Caco-2 (cell line): ENCODE measurements at regions of chr12 and their contacts with region 1.

Region 1: GRCh38 chr12:51531978-51532497 is 59.0 kb upstream of the SCN8A start:
- DNase-seq: peak; percentile 90 to 92
- H3K4me3 ChIP-seq: no peak overlapping the region
- H3K4me3 Mint-ChIP-seq: peak overlapping the region; percentile 41
- H3K27ac Mint-ChIP-seq: peak overlapping the region; percentile 82
- H3K4me1 ChIP-seq: peaks cover 51% of the 10 kb centered on the region
- H3K4me1 Mint-ChIP-seq: peaks cover 57% of the 10 kb centered on the region
- H3K27me3 ChIP-seq: no peaks in the 10 kb centered on the region
- H3K27me3 Mint-ChIP-seq: no peaks in the 10 kb centered on the region
- CTCF ChIP-seq: peak; percentile 95 to 98

Region 2: GRCh38 chr12:51424662-51425438 is 107.2 kb before region 1 on chr12 and contains the start of gene SLC4A8:
- CTCF ChIA-PET with region 1: interaction called, 58 read pairs
- POLR2A ChIA-PET with region 1: interaction called, 3 read pairs
- intact Hi-C with region 1: loop called (anchors 1 kb)
- DNase-seq: peak; percentile 97 to 99
- H3K4me3 ChIP-seq: peak within 1 kb of the TSS; percentile 57
- H3K4me3 Mint-ChIP-seq: peak within 1 kb of the TSS; percentile 81
- H3K27ac Mint-ChIP-seq: peak within 1 kb of the TSS; percentile 69
- H3K4me1 ChIP-seq: peaks cover 26% of the 10 kb centered on the region
- H3K4me1 Mint-ChIP-seq: peaks cover 48% of the 10 kb centered on the region
- H3K27me3 ChIP-seq: no peaks in the 10 kb centered on the region
- H3K27me3 Mint-ChIP-seq: no peaks in the 10 kb centered on the region
- CTCF ChIP-seq: peak; percentile 93 to 98
- total RNA-seq, gene SLC4A8: 62.7 and 67.0 TPM in 2 replicates

Region 3: DNA sequence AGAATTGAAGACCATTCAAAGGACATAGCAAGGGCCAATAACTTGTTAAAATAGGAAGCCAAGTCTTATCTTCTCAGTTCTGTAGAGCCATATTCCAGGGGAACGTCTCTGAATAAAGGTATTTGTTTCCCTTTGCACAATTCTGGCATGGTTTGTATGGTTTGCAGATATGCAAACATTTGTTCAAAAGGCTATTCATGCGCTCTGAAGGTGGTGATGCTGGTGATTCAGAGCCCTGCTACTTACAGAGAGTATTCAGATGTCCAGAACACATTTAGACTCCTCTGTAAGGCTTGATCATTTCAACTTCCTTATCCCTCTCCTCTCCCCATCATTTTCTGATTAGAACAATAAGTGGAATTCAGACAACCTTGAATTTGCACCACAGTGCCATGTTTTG is 71.5 kb before region 1 on chr12:
- CTCF ChIA-PET with region 1: no interaction called
- POLR2A ChIA-PET with region 1: no interaction called
- intact Hi-C with region 1: loop called (anchors 2 kb)
- DNase-seq: peak in 1 of 2 experiments; percentile 36
- H3K4me3 ChIP-seq: no peak overlapping the region
- H3K4me3 Mint-ChIP-seq: no peak overlapping the region
- H3K27ac Mint-ChIP-seq: no peak overlapping the region
- H3K4me1 ChIP-seq: peaks cover 18% of the 10 kb centered on the region
- H3K4me1 Mint-ChIP-seq: peaks cover 22% of the 10 kb centered on the region
- H3K27me3 ChIP-seq: no peaks in the 10 kb centered on the region
- H3K27me3 Mint-ChIP-seq: no peaks in the 10 kb centered on the region
- CTCF ChIP-seq: no peak

Region 4: GRCh38 chr12:51482929-51483697 is 48.9 kb before region 1 on chr12:
- CTCF ChIA-PET with region 1: interaction called, 10 read pairs
- POLR2A ChIA-PET with region 1: no interaction called
- intact Hi-C with region 1: loop called (anchors 1 kb)
- DNase-seq: peak in 1 of 2 experiments; percentile 11
- H3K4me3 ChIP-seq: no peak overlapping the region
- H3K4me3 Mint-ChIP-seq: no peak overlapping the region
- H3K27ac Mint-ChIP-seq: no peak overlapping the region
- H3K4me1 ChIP-seq: 0 out of 2 replicates have a peak, but pooled peaks cover 3% of the 10 kb centered on the region
- H3K4me1 Mint-ChIP-seq: peaks cover 8% of the 10 kb centered on the region
- H3K27me3 ChIP-seq: no peaks in the 10 kb centered on the region
- H3K27me3 Mint-ChIP-seq: no peaks in the 10 kb centered on the region
- CTCF ChIP-seq: no peak

Region 5: GRCh38 chr12:51590347-51591019 is 58.4 kb after region 1 on chr12:
- CTCF ChIA-PET with region 1: interaction called, 3 read pairs
- POLR2A ChIA-PET with region 1: interaction called, 3 read pairs
- intact Hi-C with region 1: loop called (anchors 2 kb)
- DNase-seq: peak; percentile 87 to 97
- H3K4me3 ChIP-seq: peak overlapping the region; percentile 92
- H3K4me3 Mint-ChIP-seq: peak overlapping the region; percentile 90
- H3K27ac Mint-ChIP-seq: peak overlapping the region; percentile 60
- H3K4me1 ChIP-seq: 0 out of 2 replicates have a peak, but pooled peaks cover 7% of the 10 kb centered on the region
- H3K4me1 Mint-ChIP-seq: peaks cover 10% of the 10 kb centered on the region
- H3K27me3 ChIP-seq: no peaks in the 10 kb centered on the region
- H3K27me3 Mint-ChIP-seq: no peaks in the 10 kb centered on the region
- CTCF ChIP-seq: peak; percentile 61 to 63

Region 6: GRCh38 chr12:51661836-51662235 is 129.8 kb after region 1 on chr12:
- CTCF ChIA-PET with region 1: no interaction called
- POLR2A ChIA-PET with region 1: no interaction called
- intact Hi-C with region 1: no loop called
- DNase-seq: no peak
- H3K4me3 ChIP-seq: no peak overlapping the region
- H3K4me3 Mint-ChIP-seq: no peak overlapping the region
- H3K27ac Mint-ChIP-seq: peak overlapping the region; percentile 58
- H3K4me1 ChIP-seq: peaks cover 29% of the 10 kb centered on the region
- H3K4me1 Mint-ChIP-seq: peaks cover 28% of the 10 kb centered on the region
- H3K27me3 ChIP-seq: no peaks in the 10 kb centered on the region
- H3K27me3 Mint-ChIP-seq: no peaks in the 10 kb centered on the region
- CTCF ChIP-seq: no peak

Region 7: GRCh38 chr12:51687614-51688013 is 155.6 kb after region 1 on chr12:
- CTCF ChIA-PET with region 1: no interaction called
- POLR2A ChIA-PET with region 1: no interaction called
- intact Hi-C with region 1: no loop called
- DNase-seq: no peak
- H3K4me3 ChIP-seq: no peak overlapping the region
- H3K4me3 Mint-ChIP-seq: peak overlapping the region; percentile 40
- H3K27ac Mint-ChIP-seq: peak overlapping the region; percentile 86
- H3K4me1 ChIP-seq: peaks cover 34% of the 10 kb centered on the region
- H3K4me1 Mint-ChIP-seq: peaks cover 46% of the 10 kb centered on the region
- H3K27me3 ChIP-seq: no peaks in the 10 kb centered on the region
- H3K27me3 Mint-ChIP-seq: no peaks in the 10 kb centered on the region
- CTCF ChIP-seq: no peak

Region 8: DNA sequence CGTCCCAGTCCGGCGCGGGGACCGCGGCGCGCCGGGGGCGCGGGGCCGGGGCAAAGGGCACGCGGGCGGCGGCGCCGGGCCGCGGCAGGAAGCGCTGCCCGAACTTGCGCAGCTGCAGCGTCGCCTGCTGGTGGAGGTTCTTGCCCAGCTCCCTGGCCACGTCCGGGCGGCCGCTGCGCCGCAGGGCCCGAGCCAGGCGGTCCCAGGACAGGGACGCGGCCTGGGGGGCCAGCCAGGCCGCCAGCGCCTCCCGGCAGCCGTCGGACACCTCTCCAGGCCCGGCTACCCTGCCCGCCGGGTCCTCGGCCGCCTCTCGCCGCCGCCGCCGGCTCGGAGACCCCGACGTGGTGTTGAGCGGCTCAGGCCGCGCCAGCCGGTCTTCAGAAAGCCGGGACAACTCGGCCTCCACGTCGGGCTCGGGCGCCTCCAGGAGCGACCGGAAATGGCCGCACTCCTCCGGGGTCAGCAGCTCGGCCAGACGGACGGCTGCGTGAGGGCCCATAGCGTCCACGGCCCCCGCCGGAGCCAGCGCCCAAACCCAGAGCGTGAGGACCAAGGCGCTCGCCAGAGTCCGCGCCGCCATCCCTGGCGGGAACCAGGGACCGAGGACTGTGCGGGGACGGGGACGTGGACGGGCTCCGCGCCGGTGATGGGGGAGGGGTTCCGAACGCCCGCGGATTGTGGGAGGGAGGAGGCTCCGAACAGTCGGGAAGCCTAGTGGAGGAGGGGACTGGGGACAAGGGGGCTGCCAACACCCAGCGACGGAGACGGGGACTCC is 282.5 kb after region 1 on chr12:
- CTCF ChIA-PET with region 1: interaction called, 11 read pairs
- POLR2A ChIA-PET with region 1: no interaction called
- intact Hi-C with region 1: loop called (anchors 2 kb)
- DNase-seq: peak; percentile 83 to 93
- H3K4me3 ChIP-seq: peak overlapping the region; percentile 66
- H3K4me3 Mint-ChIP-seq: peak overlapping the region; percentile 67
- H3K27ac Mint-ChIP-seq: peak overlapping the region; percentile 9
- H3K4me1 ChIP-seq: peaks cover 11% of the 10 kb centered on the region
- H3K4me1 Mint-ChIP-seq: peaks cover 18% of the 10 kb centered on the region
- H3K27me3 ChIP-seq: no peaks in the 10 kb centered on the region
- H3K27me3 Mint-ChIP-seq: no peaks in the 10 kb centered on the region
- CTCF ChIP-seq: peak; percentile 62 to 85